Cardiac septum (tissue), 1 donor: ENCODE measurements at regions of chr9 and their contacts with region 1.

Region 1: GRCh38 chr9:137188490-137189296 is at the starts of genes ANAPC2 and SSNA1:
- DNase-seq: peak; percentile 95
- total RNA-seq, gene ANAPC2: 32.5 TPM
- total RNA-seq, gene SSNA1: 59.5 TPM

Region 2: DNA sequence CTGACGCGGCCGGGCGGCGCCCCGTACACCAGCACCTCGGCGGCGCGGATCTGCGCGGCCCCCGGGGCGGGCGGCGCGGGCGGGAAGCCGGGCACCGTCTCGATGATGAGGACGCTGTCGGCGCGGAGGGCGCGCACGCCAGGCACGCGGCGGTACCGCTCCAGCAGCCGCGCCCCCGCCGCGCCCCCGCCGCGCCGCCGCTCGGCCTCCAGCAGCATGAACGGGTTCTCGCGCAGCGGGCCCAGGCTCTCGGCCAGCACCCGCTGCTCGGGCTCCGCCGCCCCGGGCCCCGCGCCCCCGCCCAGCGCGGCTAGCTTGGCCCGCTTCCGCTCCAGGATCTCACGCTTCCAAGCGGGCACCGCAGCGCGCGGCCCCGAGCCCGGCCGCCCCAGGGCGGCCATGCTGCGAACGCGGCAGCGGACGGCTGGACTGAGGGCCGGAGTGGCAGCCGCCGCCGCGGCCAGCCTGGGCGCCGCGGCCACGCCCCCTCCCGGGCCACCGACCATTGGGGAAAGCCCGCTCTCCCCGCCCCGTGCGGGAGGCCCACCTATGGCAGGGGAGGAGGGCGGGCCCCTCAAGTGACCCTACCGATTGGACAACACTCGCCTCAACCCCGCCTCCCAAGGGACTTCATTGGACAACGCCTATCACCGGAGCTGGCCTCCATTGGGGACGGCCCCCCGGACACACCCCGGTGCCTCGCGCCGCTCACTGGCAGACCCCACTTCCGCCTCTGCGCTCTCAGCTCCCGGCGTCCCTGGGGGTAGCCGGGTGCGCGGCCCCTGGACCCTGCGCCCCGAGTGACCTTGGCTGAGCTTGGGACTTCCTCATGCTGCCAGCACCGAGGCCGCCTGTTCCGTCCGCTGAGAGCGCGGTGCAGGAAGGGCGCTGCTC is 11.9 kb after region 1 on chr9 and contains the start of gene TPRN:
- intact Hi-C with region 1: loop called (anchors 2 kb)
- DNase-seq: peak; percentile 99
- total RNA-seq, gene TPRN: 13.5 TPM